Activated naive CD8-positive, alpha-beta T cell treated with anti-CD3 and anti-CD28 coated beads, Interleukin-2, amount 10 ng/mL, durations not matched to agents 7 days and 5 days (primary cell): ENCODE measurements at regions of chr9 and their contacts with region 1.

Region 1: DNA sequence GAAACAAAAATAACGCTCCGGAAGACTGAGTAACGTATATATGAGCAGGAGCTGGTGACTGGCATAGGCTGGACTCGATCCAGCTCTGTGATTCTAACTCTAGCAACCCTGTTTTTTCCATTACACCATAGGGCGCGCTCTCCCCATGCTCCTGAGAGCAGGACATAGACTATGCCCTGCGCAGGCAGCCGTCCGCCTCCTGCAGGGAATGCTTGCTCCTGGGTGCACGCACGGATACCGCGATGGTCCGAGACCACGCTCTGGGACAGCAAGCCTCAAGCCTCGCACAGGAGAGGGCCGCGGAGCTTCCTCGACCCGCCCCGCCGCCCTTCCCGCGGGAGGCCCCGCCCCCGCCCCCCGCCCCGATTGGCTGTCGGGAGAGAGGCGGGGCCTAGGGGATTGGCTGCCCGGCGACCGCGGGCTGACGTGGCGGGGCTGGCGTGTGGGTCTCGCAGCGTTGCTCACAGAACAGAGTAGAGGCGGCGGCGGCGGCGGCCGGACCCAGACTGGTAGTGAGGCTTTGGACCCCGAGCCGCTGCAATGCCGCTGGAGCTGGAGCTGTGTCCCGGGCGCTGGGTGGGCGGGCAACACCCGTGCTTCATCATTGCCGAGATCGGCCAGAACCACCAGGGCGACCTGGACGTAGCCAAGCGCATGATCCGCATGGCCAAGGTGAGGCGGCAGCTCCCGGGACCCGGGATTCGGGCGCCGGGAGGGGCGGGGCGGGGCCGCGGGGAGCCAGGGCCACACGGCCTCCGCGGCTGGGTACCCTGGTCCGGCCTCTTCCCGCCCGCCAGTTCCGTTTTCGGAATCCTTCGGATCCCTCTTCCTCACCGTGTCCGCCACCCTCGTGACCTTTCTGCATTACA is at the start of gene NANS:
- DNase-seq: peak; percentile 94
- ATAC-seq: peak; percentile 94
- H3K4me3 Mint-ChIP-seq: peak within 1 kb of the TSS; percentile 94
- H3K27ac Mint-ChIP-seq: peak within 1 kb of the TSS; percentile 94
- H3K4me1 Mint-ChIP-seq: peaks cover 20% of the 10 kb centered on the region
- H3K27me3 Mint-ChIP-seq: no peaks in the 10 kb centered on the region
- total RNA-seq, gene NANS: 30.0 to 31.1 TPM

Region 2: DNA sequence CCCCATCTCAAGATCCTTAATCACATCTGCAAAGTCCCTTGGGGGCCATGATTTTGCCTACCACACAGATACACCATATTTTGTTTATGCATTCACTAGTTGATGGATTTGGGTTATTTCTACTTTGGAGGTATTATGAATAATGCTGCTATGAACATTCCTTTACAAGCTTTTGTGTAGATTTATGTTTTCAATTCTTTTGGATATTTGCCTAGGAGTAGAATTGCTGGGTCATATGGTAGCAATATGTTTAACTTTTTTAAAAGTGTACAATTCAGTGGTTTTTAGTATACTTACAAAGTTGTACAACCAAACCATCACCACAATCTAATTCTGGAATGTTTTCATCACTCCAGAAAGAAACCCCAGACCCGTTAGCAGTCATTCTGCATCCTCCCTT is 81.1 kb before region 1 on chr9:
- POLR2A ChIA-PET with region 1: no interaction called
- DNase-seq: no peak
- ATAC-seq: no peak
- H3K4me3 Mint-ChIP-seq: no peak overlapping the region
- H3K27ac Mint-ChIP-seq: no peak overlapping the region
- H3K4me1 Mint-ChIP-seq: peaks cover 10% of the 10 kb centered on the region
- H3K27me3 Mint-ChIP-seq: no peaks in the 10 kb centered on the region

Region 3: DNA sequence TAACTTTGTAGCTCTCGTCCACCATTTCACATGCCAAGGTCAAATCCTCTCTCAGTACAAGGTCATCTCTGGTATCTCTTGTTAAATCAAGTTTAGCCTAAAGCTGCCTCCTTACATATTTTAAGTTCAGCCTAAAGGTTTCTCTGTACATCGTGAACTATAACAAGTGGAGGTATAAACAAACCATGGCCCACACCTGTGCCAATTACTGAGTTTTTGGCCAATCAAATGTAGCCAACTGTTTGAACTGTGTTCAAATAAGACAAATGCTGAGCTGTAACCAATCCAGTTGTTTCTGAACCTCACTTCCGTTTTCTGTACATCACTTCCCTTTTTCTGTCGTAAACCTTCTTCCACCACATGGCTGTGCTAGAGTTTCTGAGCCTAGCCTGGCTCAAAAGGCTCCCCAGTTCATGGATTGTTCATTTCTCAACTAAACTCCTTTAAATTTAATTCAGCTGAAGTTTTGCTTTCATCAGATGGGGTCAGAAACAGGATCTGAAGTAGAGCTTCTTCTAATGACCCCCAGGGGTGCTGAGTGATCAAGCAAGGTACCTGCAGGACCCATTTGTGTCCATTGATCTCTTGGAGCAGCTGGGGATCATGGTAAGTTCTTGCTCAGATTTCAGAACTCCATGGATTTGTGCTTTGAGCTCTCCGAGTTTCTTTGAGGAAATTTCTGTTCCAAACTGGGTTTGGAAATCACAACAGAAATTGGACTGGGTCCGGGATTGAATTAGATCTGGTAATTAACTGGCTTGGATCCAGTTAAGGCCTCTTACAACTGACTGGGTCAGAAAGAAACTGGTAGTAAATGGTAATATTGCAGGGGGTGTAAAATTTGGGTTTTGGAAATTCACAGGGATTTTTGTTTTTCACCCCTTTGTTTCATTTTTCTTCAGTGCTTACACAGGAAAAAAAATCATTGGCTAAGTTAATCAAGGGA is 11.0 kb before region 1 on chr9:
- POLR2A ChIA-PET with region 1: interaction called, 42 read pairs
- DNase-seq: no peak
- ATAC-seq: peak; percentile 94
- H3K4me3 Mint-ChIP-seq: peak overlapping the region; percentile 88
- H3K27ac Mint-ChIP-seq: peak overlapping the region; percentile 98
- H3K4me1 Mint-ChIP-seq: peaks cover 27% of the 10 kb centered on the region
- H3K27me3 Mint-ChIP-seq: peaks cover 7% of the 10 kb centered on the region

Region 4: DNA sequence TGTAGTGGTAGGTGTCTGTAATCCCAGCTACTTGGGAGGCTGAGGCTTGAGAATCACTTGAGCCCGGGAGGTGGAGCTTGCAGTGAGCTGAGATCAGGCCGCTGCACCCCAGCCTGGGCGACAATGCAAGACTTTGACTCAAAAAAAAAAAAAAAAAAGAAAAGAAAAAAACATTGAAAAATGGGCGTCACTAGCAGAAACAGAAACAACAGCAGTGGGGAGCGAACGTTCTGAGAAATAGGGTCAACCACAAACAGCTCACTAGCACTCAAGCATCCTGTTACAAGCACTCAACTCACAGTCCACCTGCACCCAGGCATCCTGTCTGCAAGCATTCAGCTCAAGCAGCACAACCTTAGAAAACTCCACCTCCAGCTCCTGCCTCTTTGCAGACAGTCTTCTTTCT is 45.4 kb after region 1 on chr9:
- POLR2A ChIA-PET with region 1: interaction called, 19 read pairs
- DNase-seq: peak; percentile 68
- ATAC-seq: peak; percentile 99
- H3K4me3 Mint-ChIP-seq: peak overlapping the region; percentile 89
- H3K27ac Mint-ChIP-seq: peak overlapping the region; percentile 98
- H3K4me1 Mint-ChIP-seq: peaks cover 62% of the 10 kb centered on the region
- H3K27me3 Mint-ChIP-seq: no peaks in the 10 kb centered on the region

Region 5: GRCh38 chr9:98108531-98109031 is 52.1 kb after region 1 on chr9:
- POLR2A ChIA-PET with region 1: interaction called, 14 read pairs
- DNase-seq: peak; percentile 58
- ATAC-seq: peak; percentile 91
- H3K4me3 Mint-ChIP-seq: peak overlapping the region; percentile 70
- H3K27ac Mint-ChIP-seq: peak overlapping the region; percentile 98
- H3K4me1 Mint-ChIP-seq: peaks cover 72% of the 10 kb centered on the region
- H3K27me3 Mint-ChIP-seq: no peaks in the 10 kb centered on the region

Region 6: GRCh38 chr9:98118640-98119601 is 62.4 kb after region 1 on chr9 and contains the start of gene TRIM14:
- POLR2A ChIA-PET with region 1: interaction called, 10 read pairs
- DNase-seq: peak; percentile 81
- ATAC-seq: peak; percentile 72
- H3K4me3 Mint-ChIP-seq: peak within 1 kb of the TSS; percentile 91
- H3K27ac Mint-ChIP-seq: peak within 1 kb of the TSS; percentile 94
- H3K4me1 Mint-ChIP-seq: peaks cover 41% of the 10 kb centered on the region
- H3K27me3 Mint-ChIP-seq: no peaks in the 10 kb centered on the region
- total RNA-seq, gene TRIM14: 99.0 to 108 TPM

Region 7: GRCh38 chr9:98129451-98129881 is 73.0 kb after region 1 on chr9:
- POLR2A ChIA-PET with region 1: no interaction called
- DNase-seq: no peak
- ATAC-seq: peak; percentile 53
- H3K4me3 Mint-ChIP-seq: no peak overlapping the region
- H3K27ac Mint-ChIP-seq: peak overlapping the region; percentile 59
- H3K4me1 Mint-ChIP-seq: peaks cover 7% of the 10 kb centered on the region
- H3K27me3 Mint-ChIP-seq: no peaks in the 10 kb centered on the region